Activated naive CD4-positive, alpha-beta T cell treated with anti-CD3 and anti-CD28 coated beads for 36 hours (primary cell): ENCODE measurements at regions of chr3 and their contacts with region 1.

Region 1: DNA sequence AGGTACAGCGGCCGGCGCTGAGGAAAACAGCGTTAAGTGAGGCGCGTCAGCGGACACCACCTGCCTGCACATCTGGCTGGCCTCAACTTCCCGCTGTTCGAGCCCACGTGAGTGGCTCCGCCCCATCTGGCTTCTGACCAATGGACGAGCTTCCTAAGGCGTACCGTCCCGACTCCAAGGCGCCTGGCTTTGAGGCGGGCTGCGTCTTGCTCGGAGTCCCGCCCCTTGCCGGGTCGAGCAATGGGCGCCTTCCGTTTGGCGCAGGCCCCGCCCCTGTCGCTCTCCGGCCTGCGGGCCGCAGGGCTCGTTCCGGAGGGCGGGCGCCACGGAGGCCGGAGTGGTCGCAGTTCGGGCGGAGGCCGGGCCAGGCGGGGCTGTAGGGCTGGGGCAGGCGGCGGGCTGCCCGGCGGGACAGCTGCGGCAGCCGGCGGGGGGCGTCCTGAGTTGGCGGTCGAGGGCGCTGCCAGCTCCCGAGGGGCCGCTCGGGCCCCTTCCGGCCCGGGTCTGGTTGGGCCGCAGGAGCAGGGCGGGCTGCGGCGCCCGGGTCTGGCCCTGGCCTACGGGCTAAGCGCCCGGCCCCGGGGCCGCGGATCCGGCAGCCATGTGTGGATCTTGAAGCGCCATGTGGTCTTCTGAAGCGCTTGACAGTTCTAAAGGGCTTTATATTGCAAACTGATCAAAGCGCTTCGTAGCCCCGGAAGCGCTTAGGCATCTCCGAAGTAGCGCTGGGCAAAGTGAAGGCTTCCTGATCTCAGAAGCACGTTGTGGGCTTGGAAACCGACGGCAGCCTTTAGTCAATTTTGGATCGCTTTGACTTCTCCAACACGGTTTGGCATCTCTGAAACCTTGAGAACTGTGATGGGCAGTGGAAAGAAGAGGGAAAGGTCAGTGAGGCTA is at the start of gene TATDN2:
- DNase-seq: peak; percentile 98
- H3K4me3 Mint-ChIP-seq: peak within 1 kb of the TSS; percentile 89
- H3K27ac Mint-ChIP-seq: peak within 1 kb of the TSS; percentile 92
- H3K4me1 Mint-ChIP-seq: peaks cover 55% of the 10 kb centered on the region
- H3K27me3 Mint-ChIP-seq: no peaks in the 10 kb centered on the region
- total RNA-seq, gene TATDN2: 25.8 to 28.1 TPM

Region 2: GRCh38 chr3:9890249-9891071 is 358.0 kb before region 1 on chr3 and contains the start of gene JAGN1:
- CTCF ChIA-PET with region 1: no interaction called
- intact Hi-C with region 1: loop called (anchors 2 kb)
- DNase-seq: peak; percentile 95
- H3K4me3 Mint-ChIP-seq: peak within 1 kb of the TSS; percentile 98
- H3K27ac Mint-ChIP-seq: peak within 1 kb of the TSS; percentile 97
- H3K4me1 Mint-ChIP-seq: peaks cover 43% of the 10 kb centered on the region
- H3K27me3 Mint-ChIP-seq: no peaks in the 10 kb centered on the region
- total RNA-seq, gene JAGN1: 11.7 to 13.6 TPM

Region 3: DNA sequence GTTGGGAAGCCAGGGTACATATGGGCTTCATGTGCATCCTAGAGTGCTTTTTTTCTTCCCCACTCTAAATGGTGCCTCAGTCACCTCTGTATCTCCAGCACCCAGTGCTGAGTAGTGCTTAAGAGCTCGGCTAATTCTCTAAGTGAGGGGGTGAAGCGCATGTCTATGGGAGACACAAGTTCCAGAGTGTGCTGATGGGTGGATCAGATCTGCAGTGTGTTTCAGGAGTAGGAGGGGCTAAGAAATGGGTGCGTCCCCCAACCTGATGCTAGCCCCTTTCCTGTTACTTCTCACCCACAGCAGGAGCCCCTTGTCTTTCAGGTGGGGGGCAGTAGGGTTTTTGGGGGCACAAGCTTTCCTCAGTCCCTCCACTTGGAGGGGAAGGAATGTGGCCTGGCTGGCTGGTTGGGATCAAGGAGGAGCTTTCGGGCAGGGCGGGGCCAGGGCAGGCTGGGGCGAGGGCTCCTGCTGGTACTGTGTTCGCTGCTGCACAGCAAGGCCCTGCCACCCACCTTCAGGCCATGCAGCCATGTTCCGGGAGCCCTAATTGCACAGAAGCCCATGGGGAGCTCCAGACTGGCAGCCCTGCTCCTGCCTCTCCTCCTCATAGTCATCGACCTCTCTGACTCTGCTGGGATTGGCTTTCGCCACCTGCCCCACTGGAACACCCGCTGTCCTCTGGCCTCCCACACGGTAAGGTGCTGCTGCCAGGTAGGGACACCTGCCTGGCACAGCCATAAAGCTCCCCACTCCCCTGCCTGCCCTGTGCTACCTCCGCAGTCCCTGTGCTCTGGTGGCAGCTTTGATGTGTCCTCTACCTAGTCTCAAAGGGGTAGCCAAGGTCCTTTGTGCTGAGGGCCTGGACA is 345.8 kb before region 1 on chr3 and contains the start of gene IL17RE:
- CTCF ChIA-PET with region 1: no interaction called
- intact Hi-C with region 1: no loop called
- DNase-seq: no peak
- H3K4me3 Mint-ChIP-seq: no peak within 1 kb of the TSS
- H3K27ac Mint-ChIP-seq: no peak within 1 kb of the TSS
- H3K4me1 Mint-ChIP-seq: peaks cover 38% of the 10 kb centered on the region
- H3K27me3 Mint-ChIP-seq: no peaks in the 10 kb centered on the region
- total RNA-seq, gene IL17RE: 0.24 to 0.25 TPM

Region 4: DNA sequence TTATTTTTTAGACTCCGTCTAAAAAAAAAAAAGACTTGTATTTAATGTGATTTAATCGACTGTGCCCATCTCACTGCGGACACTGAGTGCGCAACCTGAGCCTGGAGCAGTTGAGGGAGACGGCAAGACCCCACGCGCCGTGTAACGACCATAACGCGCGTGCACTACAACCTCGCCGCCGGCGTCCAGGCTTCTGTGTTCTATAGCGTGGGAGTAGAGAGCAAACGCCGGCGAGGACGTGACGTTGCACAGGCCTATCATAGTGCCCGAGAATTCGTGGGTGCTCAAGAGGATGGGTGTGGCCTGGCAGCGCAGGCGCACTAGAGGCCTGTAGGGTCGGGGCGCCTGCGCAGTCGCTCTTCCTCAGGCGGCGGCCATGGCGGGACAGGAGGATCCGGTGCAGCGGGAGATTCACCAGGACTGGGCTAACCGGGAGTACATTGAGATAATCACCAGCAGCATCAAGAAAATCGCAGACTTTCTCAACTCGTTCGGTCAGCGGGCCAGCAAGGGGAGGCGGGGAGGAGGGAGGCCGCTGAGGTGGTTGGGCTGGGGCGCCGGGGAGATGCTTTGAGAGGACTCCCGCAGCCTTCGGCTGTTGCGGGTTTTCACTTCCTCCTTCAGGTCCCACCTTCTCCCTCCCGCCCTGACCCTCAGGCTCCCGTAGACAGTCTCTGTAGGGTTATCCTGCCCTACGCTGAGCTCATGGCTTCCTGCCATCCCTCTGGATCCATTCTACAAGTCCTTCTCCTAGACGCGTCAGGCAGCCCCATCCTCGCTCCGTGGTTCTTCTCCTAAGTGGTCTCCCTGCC is 132.9 kb before region 1 on chr3 and contains the start of gene BRK1:
- CTCF ChIA-PET with region 1: no interaction called
- intact Hi-C with region 1: loop called (anchors 1 kb)
- DNase-seq: peak; percentile 97
- H3K4me3 Mint-ChIP-seq: peak within 1 kb of the TSS; percentile 92
- H3K27ac Mint-ChIP-seq: peak within 1 kb of the TSS; percentile 94
- H3K4me1 Mint-ChIP-seq: peaks cover 31% of the 10 kb centered on the region
- H3K27me3 Mint-ChIP-seq: no peaks in the 10 kb centered on the region
- total RNA-seq, gene BRK1: 73.6 to 73.7 TPM

Region 5: GRCh38 chr3:10198761-10199649 is 49.4 kb before region 1 on chr3:
- CTCF ChIA-PET with region 1: interaction called, 3 read pairs
- intact Hi-C with region 1: loop called (anchors 1 kb)
- DNase-seq: peak; percentile 91
- H3K4me3 Mint-ChIP-seq: peak overlapping the region; percentile 22
- H3K27ac Mint-ChIP-seq: peak overlapping the region; percentile 98
- H3K4me1 Mint-ChIP-seq: peaks cover 71% of the 10 kb centered on the region
- H3K27me3 Mint-ChIP-seq: no peaks in the 10 kb centered on the region

Region 6: DNA sequence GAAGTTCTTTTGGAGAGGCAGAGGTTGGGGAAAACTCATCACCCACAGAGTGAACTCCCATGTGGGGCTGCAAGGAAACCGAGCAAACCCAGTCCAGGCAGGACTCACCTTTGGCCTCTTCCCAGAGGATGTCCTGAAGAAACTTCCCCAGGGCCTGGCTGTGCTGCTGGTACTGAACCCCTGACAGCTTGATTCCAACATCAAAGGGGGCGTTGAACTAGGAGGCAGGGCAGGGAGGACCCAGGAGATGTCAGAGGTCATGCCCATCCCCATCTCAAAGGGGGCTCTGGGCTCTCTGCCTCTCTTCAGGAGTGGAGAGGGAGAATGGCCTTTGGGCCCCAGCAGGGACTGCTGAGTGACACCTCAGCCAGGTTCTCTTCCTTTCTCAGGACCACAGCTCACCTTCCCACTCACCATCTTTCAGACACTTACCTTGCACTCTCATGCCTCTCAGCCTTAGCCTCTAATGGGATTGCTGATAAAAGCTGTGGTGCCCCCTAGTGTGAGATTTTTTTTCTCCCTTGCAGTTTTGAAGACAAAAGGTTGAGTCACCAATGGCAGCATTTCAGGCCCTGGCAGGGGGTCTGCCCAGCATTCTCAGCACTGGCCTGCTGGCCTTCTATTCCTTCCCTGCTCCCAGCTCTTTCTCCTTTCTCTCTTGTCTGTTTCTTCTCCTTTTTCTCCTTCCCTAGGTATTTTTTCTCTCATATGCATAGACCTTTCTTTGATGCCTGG is 38.3 kb after region 1 on chr3:
- CTCF ChIA-PET with region 1: no interaction called
- intact Hi-C with region 1: loop called (anchors 1 kb)
- DNase-seq: peak; percentile 67
- H3K4me3 Mint-ChIP-seq: no peak overlapping the region
- H3K27ac Mint-ChIP-seq: no peak overlapping the region
- H3K4me1 Mint-ChIP-seq: peaks cover 41% of the 10 kb centered on the region
- H3K27me3 Mint-ChIP-seq: no peaks in the 10 kb centered on the region

Region 7: GRCh38 chr3:10602769-10603768 is 354.6 kb after region 1 on chr3:
- CTCF ChIA-PET with region 1: no interaction called
- intact Hi-C with region 1: no loop called
- DNase-seq: peak; percentile 81
- H3K4me3 Mint-ChIP-seq: no peak overlapping the region
- H3K27ac Mint-ChIP-seq: no peak overlapping the region
- H3K4me1 Mint-ChIP-seq: peaks cover 35% of the 10 kb centered on the region
- H3K27me3 Mint-ChIP-seq: peaks cover 15% of the 10 kb centered on the region

Region 8: DNA sequence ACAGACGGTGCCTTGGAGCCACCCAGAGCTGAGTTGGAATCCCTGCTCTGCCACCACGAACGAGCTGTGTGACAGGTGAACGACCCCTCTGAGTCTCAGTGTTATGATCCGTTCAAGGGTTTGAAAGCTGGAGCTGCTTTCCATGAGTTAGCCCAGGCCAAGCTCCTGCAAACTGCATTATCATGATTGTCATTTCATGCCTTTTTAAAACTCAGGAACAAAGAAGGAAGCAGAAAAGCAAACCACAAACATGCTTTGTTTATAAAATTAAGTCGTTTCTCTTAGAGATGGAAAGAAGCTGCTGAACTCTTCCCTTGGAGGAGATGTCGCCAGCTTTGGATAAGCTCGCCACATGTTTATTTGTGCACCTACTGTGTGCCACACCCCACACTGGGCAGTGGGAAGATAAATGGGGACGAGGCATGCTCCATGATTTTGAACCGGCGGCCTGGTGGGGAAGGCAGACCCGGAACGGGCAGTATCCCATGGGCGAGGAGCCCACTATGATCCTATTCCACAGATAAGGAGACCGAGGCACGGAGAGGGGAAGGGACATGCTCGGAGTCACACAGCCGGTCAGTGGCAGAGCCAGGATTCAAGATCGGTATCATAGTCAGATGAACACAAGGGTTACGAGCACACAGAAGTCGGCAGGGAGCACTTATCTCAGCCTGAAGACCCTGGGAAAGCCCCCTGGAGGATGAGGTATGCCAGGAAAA is 921.8 kb after region 1 on chr3:
- CTCF ChIA-PET with region 1: no interaction called
- intact Hi-C with region 1: no loop called
- DNase-seq: no peak
- H3K4me3 Mint-ChIP-seq: no peak overlapping the region
- H3K27ac Mint-ChIP-seq: no peak overlapping the region
- H3K4me1 Mint-ChIP-seq: no peaks in the 10 kb centered on the region
- H3K27me3 Mint-ChIP-seq: no peaks in the 10 kb centered on the region